ENCODE measurements at regions of chr7 and their contacts with region 1.

Region 1: GRCh38 chr7:2209146-2209960 is 23.4 kb downstream of the MAD1L1 start:
- DNase-seq: peak; percentile 47 to 70 (median 64)
- H3K4me3 ChIP-seq: no peak overlapping the region
- H3K27ac ChIP-seq: no peak overlapping the region
- H3K4me1 ChIP-seq: peaks cover 0 to 3% (median 0%) of the 10 kb centered on the region in 4 experiments
- H3K27me3 ChIP-seq: no peaks in the 10 kb centered on the region

Region 2: GRCh38 chr7:2299131-2299829 is 89.9 kb after region 1 on chr7:
- CTCF ChIA-PET with region 1: no interaction called
- POLR2A ChIA-PET with region 1: no interaction called
- DNase-seq: peak; percentile 23 to 52 (median 26)
- H3K4me3 ChIP-seq: peak overlapping the region in 2 of 7 experiments; percentile 13 to 55
- H3K27ac ChIP-seq: no peak overlapping the region
- H3K4me1 ChIP-seq: peaks cover 6 to 28% (median 17%) of the 10 kb centered on the region in 4 experiments
- H3K27me3 ChIP-seq: no peaks in the 10 kb centered on the region

Region 3: DNA sequence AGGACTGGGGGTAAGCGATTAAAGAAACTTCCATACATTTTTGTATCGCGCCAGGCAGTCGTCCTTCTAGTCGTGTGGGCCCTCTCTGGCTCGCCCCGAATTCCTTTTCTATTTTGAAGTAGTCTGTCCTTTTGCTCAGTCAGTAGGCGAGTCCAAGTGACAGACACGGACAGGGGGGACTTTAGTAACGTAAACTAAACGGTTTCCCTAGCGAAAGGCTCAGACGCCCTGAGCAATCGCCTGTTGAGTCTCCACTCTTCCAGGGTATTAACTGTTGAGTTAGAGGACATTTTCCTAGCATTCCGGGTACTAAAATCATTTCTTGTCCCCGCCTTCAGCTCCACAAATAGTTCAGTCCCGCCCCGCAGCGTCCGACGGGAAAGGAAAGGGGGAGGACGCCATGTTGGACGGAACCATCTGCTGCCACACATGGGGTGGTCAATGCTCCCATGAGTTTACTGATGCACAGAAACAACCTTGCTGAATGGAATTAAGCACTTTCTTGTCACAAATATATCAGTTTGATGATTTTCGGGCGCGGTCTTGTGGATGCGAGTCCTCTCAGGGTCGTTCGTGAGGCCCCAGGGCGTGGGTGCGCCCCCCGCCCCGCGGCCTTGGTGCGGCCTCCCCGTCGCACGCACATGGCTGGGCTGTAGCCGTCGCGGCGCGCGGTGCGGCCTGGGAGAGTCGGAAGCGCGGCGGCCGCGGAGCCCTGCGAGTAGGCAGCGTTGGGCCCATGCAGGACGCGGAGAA is 145.0 kb after region 1 on chr7 and contains the start of gene EIF3B:
- CTCF ChIA-PET with region 1: interaction called, 10 read pairs
- POLR2A ChIA-PET with region 1: interaction called, 3 read pairs
- DNase-seq: peak; percentile 95 to 97 (median 97)
- H3K4me3 ChIP-seq: peak within 1 kb of the TSS; percentile 84 to 97 (median 90)
- H3K27ac ChIP-seq: peak within 1 kb of the TSS; percentile 100
- H3K4me1 ChIP-seq: peaks cover 11 to 43% (median 32%) of the 10 kb centered on the region in 4 experiments
- H3K27me3 ChIP-seq: no peaks in the 10 kb centered on the region

Measured in common myeloid progenitor, CD34-positive (primary cell).